ENCODE measurements at regions of chr3 and their contacts with region 1.

Region 1: GRCh38 chr3:132569153-132569552 is 27.9 kb upstream of the ACKR4 start:
- DNase-seq: no peak
- ATAC-seq: peak; percentile 82
- H3K4me3 Mint-ChIP-seq: no peak overlapping the region
- H3K27ac Mint-ChIP-seq: peak overlapping the region; percentile 84
- H3K4me1 Mint-ChIP-seq: peaks cover 17% of the 10 kb centered on the region
- H3K27me3 Mint-ChIP-seq: no peaks in the 10 kb centered on the region

Region 2: GRCh38 chr3:132543036-132543739 is 26.0 kb before region 1 on chr3:
- CTCF ChIA-PET with region 1: no interaction called
- POLR2A ChIA-PET with region 1: interaction called, 3 read pairs
- intact Hi-C with region 1: loop called in 1 of 2 experiments (anchors 2 kb)
- DNase-seq: no peak
- ATAC-seq: peak; percentile 73
- H3K4me3 Mint-ChIP-seq: no peak overlapping the region
- H3K27ac Mint-ChIP-seq: peak overlapping the region; percentile 87
- H3K4me1 Mint-ChIP-seq: peaks cover 25% of the 10 kb centered on the region
- H3K27me3 Mint-ChIP-seq: no peaks in the 10 kb centered on the region

Region 3: DNA sequence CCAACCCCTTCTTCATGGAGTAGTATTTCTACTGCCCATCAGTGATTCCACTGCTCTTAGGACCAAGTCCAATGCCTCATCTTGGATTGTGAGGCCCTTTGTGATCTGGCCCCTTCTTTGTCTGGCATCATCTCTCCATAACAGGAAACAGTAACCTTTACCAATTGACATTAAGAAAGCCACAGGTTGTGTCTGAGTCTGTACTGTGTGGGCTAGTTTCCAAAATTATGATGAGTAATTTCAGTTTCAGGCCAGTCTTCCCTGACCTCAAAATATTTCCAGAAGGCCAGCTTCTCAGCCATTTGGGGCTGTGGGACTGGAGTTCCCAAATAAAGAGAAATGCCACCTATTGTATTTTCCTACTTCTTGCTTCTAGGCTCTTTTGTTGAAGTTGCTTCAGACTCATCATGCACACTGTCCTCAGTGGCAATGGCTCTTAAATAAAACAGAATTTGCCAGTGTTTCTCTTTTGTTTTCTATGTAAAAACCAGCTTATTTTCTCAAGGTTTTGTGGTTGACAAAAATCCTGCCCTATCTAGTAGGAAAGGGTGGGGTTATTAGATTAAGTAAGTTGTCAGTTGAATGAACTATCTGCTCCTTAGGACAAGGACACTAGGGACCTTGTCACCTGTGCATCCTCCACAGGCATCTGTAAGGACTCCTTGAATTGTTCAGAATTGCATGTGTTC is 19.1 kb before region 1 on chr3:
- CTCF ChIA-PET with region 1: no interaction called
- POLR2A ChIA-PET with region 1: interaction called, 3 read pairs
- intact Hi-C with region 1: loop called (anchors 1 to 2 kb)
- DNase-seq: peak; percentile 14
- ATAC-seq: peak; percentile 86
- H3K4me3 Mint-ChIP-seq: peak overlapping the region; percentile 32
- H3K27ac Mint-ChIP-seq: peak overlapping the region; percentile 94
- H3K4me1 Mint-ChIP-seq: peaks cover 28% of the 10 kb centered on the region
- H3K27me3 Mint-ChIP-seq: no peaks in the 10 kb centered on the region

Region 4: GRCh38 chr3:132587401-132587800 is 18.2 kb after region 1 on chr3:
- CTCF ChIA-PET with region 1: no interaction called
- POLR2A ChIA-PET with region 1: no interaction called
- intact Hi-C with region 1: no loop called
- DNase-seq: no peak
- ATAC-seq: no peak
- H3K4me3 Mint-ChIP-seq: no peak overlapping the region
- H3K27ac Mint-ChIP-seq: no peak overlapping the region
- H3K4me1 Mint-ChIP-seq: no peaks in the 10 kb centered on the region
- H3K27me3 Mint-ChIP-seq: no peaks in the 10 kb centered on the region